Astrocyte of the cerebellum (primary cell): ENCODE measurements at regions of chr3 and their contacts with region 1.

Region 1: GRCh38 chr3:198021320-198021719 is 61.3 kb downstream of the LMLN start:
- DNase-seq: no peak
- H3K4me3 ChIP-seq: no peak overlapping the region
- CTCF ChIP-seq: no peak

Region 2: GRCh38 chr3:198061119-198062067 is 40.1 kb after region 1 on chr3:
- in situ Hi-C with region 1: loop called (anchors 5 kb)
- DNase-seq: no peak
- H3K4me3 ChIP-seq: no peak overlapping the region
- CTCF ChIP-seq: no peak